Dendritic cell treated with granulocyte-macrophage colony-stimulating factor and Interleukin-4, amounts not matched to agents 40 ng/mL and 50 ng/mL, for 4 days (primary cell): ENCODE measurements at regions of chr21 and their contacts with region 1.

Region 1: DNA sequence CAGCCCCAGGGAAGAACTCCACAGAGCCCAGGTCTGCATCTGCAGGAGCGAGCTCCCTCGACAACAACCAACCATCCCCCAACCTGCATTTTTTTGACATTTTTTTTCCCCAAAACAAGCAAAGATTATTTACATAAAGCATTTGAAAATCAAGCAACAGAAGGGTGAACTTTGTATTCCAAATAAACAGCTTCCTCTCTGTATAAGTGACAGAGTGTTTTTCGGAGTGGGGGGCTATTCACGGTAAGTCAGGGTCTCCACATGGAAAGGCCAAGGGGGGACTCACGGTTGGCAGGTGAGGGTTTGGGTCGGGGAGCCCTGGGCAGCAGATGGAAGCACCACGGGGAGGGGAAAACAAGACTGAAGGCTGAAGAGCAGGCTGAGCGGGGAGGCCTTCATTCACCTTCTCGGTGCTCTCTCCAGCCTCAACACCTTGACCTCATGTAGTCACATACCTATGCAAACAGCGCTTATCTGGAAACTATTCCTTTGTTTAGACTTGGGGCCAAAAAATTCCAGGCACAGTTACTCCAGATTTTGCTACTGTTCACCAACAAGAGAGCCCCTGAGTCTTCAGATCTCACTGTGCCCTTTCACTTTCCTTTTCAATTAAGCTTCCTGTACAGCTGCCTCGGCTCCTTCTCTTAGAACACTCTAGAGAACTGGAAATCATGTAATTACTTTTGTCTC is 27.6 kb downstream of the C2CD2 start:
- H3K4me3 Mint-ChIP-seq: peak overlapping the region; percentile 81
- H3K27ac Mint-ChIP-seq: peak overlapping the region; percentile 96
- H3K4me1 Mint-ChIP-seq: peaks cover 93% of the 10 kb centered on the region
- H3K27me3 Mint-ChIP-seq: peaks cover 2% of the 10 kb centered on the region

Region 2: DNA sequence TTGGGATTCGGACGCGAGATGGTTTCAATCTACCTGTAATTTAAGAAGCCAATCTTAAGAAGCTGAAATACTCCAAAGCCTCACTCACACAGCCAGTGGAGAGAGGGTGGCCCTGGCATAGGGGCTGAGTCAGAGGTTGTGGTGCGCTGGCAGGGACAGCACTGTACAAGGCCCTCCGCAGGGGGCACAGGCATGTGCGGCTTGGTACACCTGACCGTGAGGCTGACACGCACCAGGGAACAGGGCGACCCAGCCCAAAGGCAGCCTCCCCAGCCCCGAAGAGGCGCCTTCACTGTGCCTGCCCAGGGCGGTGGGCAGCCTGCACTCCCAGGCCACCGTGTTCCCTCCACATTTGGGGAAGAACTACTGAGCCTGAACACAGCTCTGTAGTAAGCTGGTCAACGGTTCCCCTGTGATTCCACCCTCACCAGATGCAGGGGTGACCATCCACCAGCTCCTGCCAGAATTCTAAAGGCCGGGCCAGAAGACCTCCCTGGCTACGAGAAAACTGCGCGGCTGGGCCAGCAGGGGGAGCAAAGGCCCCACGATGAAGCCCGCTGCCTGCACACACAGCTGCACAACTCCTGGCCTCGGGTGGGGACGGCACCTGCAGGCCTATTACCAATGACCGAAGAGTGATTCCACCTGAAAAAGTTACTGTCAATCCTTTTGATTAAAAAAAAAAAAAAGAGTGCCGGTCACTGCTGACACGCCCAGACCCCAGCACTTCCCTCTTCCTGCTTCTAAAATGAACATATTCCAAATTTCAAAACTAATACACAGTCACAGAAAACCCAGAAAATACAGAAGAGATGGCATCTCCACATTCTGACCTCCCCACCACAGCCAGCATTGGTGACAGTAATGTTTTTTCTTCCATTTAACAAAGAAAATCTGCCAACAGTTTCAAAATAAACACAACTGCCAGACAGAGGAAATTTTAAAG is 109.8 kb before region 1 on chr21:
- intact Hi-C with region 1: no loop called
- H3K4me3 Mint-ChIP-seq: peak overlapping the region; percentile 41
- H3K27ac Mint-ChIP-seq: no peak overlapping the region
- H3K4me1 Mint-ChIP-seq: peaks cover 5% of the 10 kb centered on the region
- H3K27me3 Mint-ChIP-seq: no peaks in the 10 kb centered on the region

Region 3: GRCh38 chr21:41847066-41847804 is 79.0 kb before region 1 on chr21:
- intact Hi-C with region 1: no loop called
- H3K4me3 Mint-ChIP-seq: no peak overlapping the region
- H3K27ac Mint-ChIP-seq: no peak overlapping the region
- H3K4me1 Mint-ChIP-seq: peaks cover 5% of the 10 kb centered on the region
- H3K27me3 Mint-ChIP-seq: no peaks in the 10 kb centered on the region

Region 4: GRCh38 chr21:41953831-41954653 is 27.8 kb after region 1 on chr21 and contains the start of gene C2CD2:
- intact Hi-C with region 1: loop called (anchors 2 kb)
- H3K4me3 Mint-ChIP-seq: peak within 1 kb of the TSS; percentile 79
- H3K27ac Mint-ChIP-seq: peak within 1 kb of the TSS; percentile 73
- H3K4me1 Mint-ChIP-seq: peaks cover 55% of the 10 kb centered on the region
- H3K27me3 Mint-ChIP-seq: peaks cover 5% of the 10 kb centered on the region